ENCODE measurements at regions of chr22 and their contacts with region 1.

Region 1: GRCh38 chr22:38881464-38881871 is 9.5 kb upstream of the CBX6 start:
- DNase-seq: no peak
- ATAC-seq: no peak
- H3K4me3 Mint-ChIP-seq: no peak overlapping the region
- H3K27ac Mint-ChIP-seq: no peak overlapping the region
- H3K4me1 Mint-ChIP-seq: peaks cover 26% of the 10 kb centered on the region
- H3K27me3 Mint-ChIP-seq: no peaks in the 10 kb centered on the region

Region 2: DNA sequence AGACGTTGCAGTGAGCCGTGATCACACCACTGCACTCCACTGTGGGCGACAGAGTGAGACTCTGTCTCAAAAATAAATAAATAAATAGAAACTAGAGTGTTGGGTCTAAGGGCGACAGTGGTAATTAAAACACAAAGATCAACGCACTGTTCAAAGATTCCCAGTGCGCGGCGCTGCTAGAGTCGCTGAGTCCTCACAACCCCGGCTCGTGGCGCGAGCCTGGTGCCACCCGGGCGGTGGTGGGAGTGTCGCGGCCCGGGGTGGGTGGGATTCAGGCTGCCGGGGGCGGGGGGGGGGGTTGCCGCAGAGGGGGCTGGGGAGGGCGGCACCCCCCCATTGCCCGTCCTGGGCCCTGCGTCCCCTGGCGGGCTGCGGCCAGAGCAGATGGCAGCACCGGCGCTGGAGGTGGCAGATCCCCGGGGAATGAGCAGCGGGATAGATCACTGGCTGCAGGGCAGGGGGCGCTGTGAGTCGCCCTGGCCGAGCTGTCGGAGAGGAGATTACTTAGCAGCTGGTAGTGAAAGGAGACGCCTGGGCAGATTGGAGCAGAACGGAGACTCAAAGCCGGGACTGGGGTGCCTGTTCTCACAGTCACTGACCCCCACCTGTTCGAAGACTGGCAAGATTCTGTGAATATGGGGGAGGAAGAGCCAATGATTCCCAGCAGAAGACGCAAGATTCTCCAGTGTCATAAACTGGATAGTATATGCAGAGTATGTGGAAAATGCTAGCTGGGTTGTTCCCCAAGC is 45.7 kb after region 1 on chr22:
- CTCF ChIA-PET with region 1: interaction called, 4 read pairs
- POLR2A ChIA-PET with region 1: no interaction called
- intact Hi-C with region 1: loop called in 1 of 2 experiments (anchors 5 kb)
- DNase-seq: peak; percentile 78
- ATAC-seq: peak; percentile 86
- H3K4me3 Mint-ChIP-seq: peak overlapping the region; percentile 14
- H3K27ac Mint-ChIP-seq: no peak overlapping the region
- H3K4me1 Mint-ChIP-seq: peaks cover 3% of the 10 kb centered on the region
- H3K27me3 Mint-ChIP-seq: peaks cover 38% of the 10 kb centered on the region

Measured in activated CD4-positive, alpha-beta T cell treated with anti-CD3 and anti-CD28 coated beads for 36 hours (primary cell).